Activated T-helper 1 cell treated with anti-CD3 and anti-CD28 coated beads, Interleukin-12 subunit alpha, Interleukin-12 subunit beta, Interleukin-2, Interleukin-4 antibody, amounts not matched to agents 30 ng/mL and 10 ng/mL and 1 ng/mL, durations not matched to agents 14 hours and 24 hours and 36 hours (primary cell): ENCODE measurements at regions of chr5 and their contacts with region 1.

Region 1: GRCh38 chr5:378301-378891 is 56.9 kb downstream of the AHRR start:
- DNase-seq: peak; percentile 40
- H3K4me3 Mint-ChIP-seq: peak overlapping the region; percentile 72
- H3K27ac Mint-ChIP-seq: peak overlapping the region; percentile 91
- H3K4me1 Mint-ChIP-seq: peaks cover 71% of the 10 kb centered on the region
- H3K27me3 Mint-ChIP-seq: no peaks in the 10 kb centered on the region

Region 2: GRCh38 chr5:321230-321725 is 57.1 kb before region 1 on chr5 and contains the start of gene AHRR:
- intact Hi-C with region 1: loop called (anchors 1 kb)
- DNase-seq: peak; percentile 64
- H3K4me3 Mint-ChIP-seq: peak within 1 kb of the TSS; percentile 83
- H3K27ac Mint-ChIP-seq: peak within 1 kb of the TSS; percentile 44
- H3K4me1 Mint-ChIP-seq: peaks cover 14% of the 10 kb centered on the region
- H3K27me3 Mint-ChIP-seq: peaks cover 11% of the 10 kb centered on the region
- total RNA-seq, gene AHRR: 22.7 and 23.7 TPM in 2 replicates

Region 3: DNA sequence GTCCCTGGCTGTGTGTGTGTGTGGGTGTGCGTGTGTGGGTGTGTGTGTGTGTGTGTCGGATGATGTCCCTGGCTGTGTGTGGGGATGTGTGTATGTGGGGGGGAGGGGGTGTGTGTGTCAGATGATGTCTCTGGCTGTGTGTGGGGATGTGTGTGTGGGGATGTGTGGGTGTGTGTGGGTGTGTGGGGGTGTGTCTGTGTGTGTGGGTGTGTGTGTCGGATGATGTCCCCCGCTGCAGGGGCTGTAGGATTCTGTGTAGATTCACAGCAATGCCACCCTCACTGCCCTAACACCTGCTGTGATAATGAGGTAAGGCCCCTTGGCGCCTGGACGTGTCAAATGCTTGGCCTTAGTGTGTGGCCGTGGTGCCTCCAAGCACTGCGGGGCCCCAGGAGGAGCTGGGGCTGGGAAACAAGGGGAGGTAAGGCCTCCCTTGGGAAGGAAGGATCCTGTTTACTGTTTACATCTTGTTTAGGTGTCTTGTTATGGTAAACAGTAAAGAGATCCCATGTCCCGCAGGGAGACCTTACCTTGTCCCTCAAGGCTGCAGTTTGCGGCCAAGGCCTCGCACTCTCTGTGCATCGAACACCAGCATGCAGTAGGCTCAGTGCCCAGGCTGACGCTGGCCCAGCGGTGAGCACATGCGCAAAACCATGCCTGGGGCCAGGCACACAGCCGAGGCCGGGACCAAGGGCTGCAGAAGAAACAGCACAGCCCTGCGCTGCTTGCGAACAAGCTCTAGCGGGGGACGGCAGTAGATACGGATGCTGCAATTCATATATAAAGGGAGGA is 32.8 kb before region 1 on chr5:
- intact Hi-C with region 1: loop called (anchors 1 kb)
- DNase-seq: no peak
- H3K4me3 Mint-ChIP-seq: peak overlapping the region; percentile 13
- H3K27ac Mint-ChIP-seq: peak overlapping the region; percentile 23
- H3K4me1 Mint-ChIP-seq: peaks cover 44% of the 10 kb centered on the region
- H3K27me3 Mint-ChIP-seq: no peaks in the 10 kb centered on the region

Region 4: GRCh38 chr5:392431-392988 is 14.1 kb after region 1 on chr5:
- intact Hi-C with region 1: loop called (anchors 1 kb)
- DNase-seq: peak; percentile 87
- H3K4me3 Mint-ChIP-seq: peak overlapping the region; percentile 74
- H3K27ac Mint-ChIP-seq: peak overlapping the region; percentile 98
- H3K4me1 Mint-ChIP-seq: peaks cover 36% of the 10 kb centered on the region
- H3K27me3 Mint-ChIP-seq: peaks cover 2% of the 10 kb centered on the region

Region 5: GRCh38 chr5:411728-412127 is 33.3 kb after region 1 on chr5:
- intact Hi-C with region 1: loop called (anchors 1 kb)
- DNase-seq: no peak
- H3K4me3 Mint-ChIP-seq: no peak overlapping the region
- H3K27ac Mint-ChIP-seq: no peak overlapping the region
- H3K4me1 Mint-ChIP-seq: peaks cover 14% of the 10 kb centered on the region
- H3K27me3 Mint-ChIP-seq: no peaks in the 10 kb centered on the region

Region 6: DNA sequence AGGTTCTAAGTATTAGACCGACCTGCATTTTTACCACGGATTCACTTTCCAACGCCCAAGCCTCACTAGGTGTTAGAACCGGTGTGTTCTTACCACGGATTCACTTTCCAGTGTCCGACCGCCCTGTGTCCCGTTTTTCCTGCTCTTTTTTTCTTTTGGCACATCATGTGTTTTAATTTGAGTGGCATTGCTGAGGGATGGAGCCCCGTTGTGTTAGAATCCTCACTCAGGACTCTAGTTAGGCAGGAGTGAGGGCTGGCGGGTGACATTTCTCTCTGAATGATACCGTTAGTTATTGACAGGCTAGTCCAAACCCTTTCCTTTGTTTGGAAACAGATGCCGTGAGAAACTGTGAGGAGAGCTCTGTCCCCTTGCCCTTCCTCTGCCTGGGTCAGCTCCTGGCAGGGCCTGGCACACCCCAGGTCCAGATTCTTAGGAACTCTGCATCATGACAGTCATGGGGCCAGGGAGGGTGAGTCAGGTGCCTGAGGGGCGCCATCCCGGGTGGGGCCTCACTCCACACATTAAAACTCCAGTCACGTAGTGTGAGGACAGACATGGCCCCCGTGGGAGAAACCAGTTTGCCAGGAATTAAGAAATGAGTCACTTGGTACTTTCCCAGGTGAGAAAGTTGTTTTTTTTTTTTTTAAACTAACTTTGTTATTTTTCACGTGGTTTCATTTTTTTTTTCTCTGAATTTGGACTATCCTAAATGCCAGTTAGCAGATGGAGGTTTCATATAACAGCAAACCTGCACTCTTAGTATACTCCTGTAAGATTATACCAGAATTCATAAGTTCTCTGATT is 80.4 kb after region 1 on chr5:
- intact Hi-C with region 1: loop called (anchors 2 kb)
- DNase-seq: peak; percentile 56
- H3K4me3 Mint-ChIP-seq: peak overlapping the region; percentile 59
- H3K27ac Mint-ChIP-seq: peak overlapping the region; percentile 91
- H3K4me1 Mint-ChIP-seq: peaks cover 75% of the 10 kb centered on the region
- H3K27me3 Mint-ChIP-seq: no peaks in the 10 kb centered on the region